Activated T-helper 2 cell treated with anti-CD3 and anti-CD28 coated beads, Interferon-gamma antibody, Interleukin-2, Interleukin-4, amounts not matched to agents 10 μg/mL and 5 μg/mL and 100 μg/mL, durations not matched to agents 14 hours and 24 hours and 36 hours (primary cell): ENCODE measurements at regions of chr1 and their contacts with region 1.

Region 1: GRCh38 chr1:8817406-8818324 is at the start of gene RERE:
- DNase-seq: peak; percentile 96
- H3K4me3 Mint-ChIP-seq: peak within 1 kb of the TSS; percentile 86
- H3K27ac Mint-ChIP-seq: peak within 1 kb of the TSS; percentile 84
- H3K4me1 Mint-ChIP-seq: peaks cover 41% of the 10 kb centered on the region
- H3K27me3 Mint-ChIP-seq: peaks cover 11% of the 10 kb centered on the region
- total RNA-seq, gene RERE: 139 and 154 TPM in 2 replicates

Region 2: DNA sequence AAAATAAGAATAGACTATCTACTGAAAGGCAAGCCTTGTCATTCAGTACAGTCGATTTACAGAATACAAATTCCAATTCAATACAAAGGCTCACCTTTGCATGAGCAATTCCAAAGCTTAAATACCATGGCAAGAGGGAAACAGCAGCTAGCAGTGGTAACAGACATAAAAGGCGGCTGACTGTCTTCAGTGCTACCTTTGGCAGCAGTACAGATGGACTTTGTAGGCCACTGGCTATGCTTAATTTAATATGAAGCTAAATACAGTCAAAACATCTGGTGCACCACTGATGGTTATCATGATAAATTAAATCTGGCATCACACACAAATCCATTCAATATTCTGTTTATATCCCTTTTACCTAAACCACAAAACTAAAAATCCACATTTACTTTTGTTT is 62.7 kb before region 1 on chr1:
- intact Hi-C with region 1: loop called (anchors 5 kb)
- DNase-seq: no peak
- H3K4me3 Mint-ChIP-seq: no peak overlapping the region
- H3K27ac Mint-ChIP-seq: no peak overlapping the region
- H3K4me1 Mint-ChIP-seq: peaks cover 45% of the 10 kb centered on the region
- H3K27me3 Mint-ChIP-seq: no peaks in the 10 kb centered on the region

Region 3: DNA sequence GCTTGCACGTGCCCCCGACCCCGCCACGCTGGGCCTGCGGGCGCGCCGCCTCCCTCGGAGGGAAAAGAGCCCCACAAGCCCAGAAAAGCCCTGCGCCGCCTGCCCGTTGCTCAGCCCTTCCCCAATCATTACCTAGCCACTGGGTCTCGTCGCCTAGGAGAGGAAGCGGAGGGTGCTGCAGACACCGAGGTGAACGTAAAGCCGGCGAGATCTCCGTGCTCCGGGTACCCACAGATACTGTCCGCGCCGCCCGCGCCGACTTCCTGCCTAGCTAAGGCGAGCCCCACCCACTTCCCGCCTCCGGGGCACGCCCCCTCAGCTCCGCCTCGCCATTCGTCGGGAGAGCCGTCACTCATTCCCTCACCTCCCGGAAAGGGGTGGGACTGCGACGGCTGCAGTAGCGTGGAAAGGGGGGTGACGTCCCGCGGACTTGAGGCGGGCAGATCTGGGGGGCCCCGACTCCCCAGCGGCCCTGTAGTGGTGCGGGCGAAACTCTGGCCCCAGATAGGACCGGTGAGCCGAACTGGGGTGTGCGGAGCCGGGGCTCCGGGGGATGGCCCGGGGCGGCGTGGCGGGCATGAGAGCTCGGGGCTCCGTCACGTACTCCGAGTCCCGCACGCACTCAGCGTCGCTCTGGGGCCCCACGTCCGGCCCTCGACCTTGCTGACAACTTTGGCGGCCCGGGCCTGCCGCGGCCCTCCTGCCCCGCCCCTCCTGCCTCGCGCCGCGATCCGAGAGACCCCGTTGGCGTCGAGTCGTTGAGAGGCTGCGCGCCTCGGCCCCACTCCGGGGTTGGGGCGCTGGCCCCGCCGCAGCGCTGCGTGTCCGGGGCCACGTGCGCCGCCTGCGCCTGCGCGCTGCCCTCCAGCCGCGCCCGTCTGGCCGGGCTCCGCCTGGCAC is 61.0 kb after region 1 on chr1 and contains the start of gene ENO1:
- intact Hi-C with region 1: loop called (anchors 10 kb)
- DNase-seq: peak; percentile 100
- H3K4me3 Mint-ChIP-seq: peak within 1 kb of the TSS; percentile 98
- H3K27ac Mint-ChIP-seq: peak within 1 kb of the TSS; percentile 100
- H3K4me1 Mint-ChIP-seq: peaks cover 29% of the 10 kb centered on the region
- H3K27me3 Mint-ChIP-seq: no peaks in the 10 kb centered on the region
- total RNA-seq, gene ENO1: 3,630 and 3,637 TPM in 2 replicates